Naive thymus-derived CD4-positive, alpha-beta T cell (primary cell): ENCODE measurements at regions of chr2 and their contacts with region 1.

Region 1: DNA sequence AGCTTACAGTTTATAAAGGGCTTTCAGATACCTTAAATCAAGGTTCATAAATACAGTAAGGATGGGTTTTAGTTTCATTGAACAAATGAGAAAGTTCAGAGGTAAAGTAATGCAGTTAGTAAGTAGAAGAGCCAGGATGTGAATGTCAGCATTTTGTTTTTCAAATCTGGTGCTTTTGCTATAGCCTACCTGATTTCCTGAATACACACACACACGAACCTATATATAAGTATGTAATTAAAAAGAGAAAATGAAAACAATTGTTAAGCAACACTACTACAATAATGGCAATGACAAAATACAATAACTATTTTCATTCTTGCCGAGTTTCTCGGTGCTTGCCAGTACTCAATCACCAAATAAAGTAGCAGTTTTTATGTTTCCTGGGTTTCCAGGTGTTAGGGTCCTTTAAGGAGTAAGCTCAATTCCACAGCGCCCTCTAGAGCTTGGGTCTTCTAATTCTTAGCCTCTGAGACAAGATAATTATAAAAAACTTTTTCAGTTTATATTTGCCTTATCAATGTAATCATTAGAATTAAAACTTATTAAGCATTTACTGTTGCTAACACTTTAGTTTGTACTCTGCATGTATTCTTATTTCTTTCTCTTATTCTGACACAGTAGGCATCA is 512.9 kb upstream of the ACVR2A start:
- DNase-seq: peak in 4 of 9 donors; percentile 22 to 29 (median 25)
- ATAC-seq: peak; percentile 52
- H3K4me3 ChIP-seq: no peak overlapping the region
- H3K4me3 Mint-ChIP-seq: peak overlapping the region in 1 of 10 donors; percentile 28
- H3K27ac ChIP-seq: no peak overlapping the region
- H3K27ac Mint-ChIP-seq: no peak overlapping the region
- H3K4me1 ChIP-seq: no peaks in the 10 kb centered on the region
- H3K4me1 Mint-ChIP-seq: peaks cover 2 to 25% (median 10%) of the 10 kb centered on the region in 7 donors
- H3K27me3 ChIP-seq: no peaks in the 10 kb centered on the region
- H3K27me3 Mint-ChIP-seq: peaks cover 0 to 2% (median 0%) of the 10 kb centered on the region in 5 donors

Region 2: GRCh38 chr2:147045113-147045512 is 286.8 kb before region 1 on chr2:
- CTCF ChIA-PET with region 1: no interaction called
- POLR2A ChIA-PET with region 1: no interaction called
- intact Hi-C with region 1: loop called (anchors 1 to 10 kb)
- DNase-seq: peak in 7 of 9 donors; percentile 5 to 26 (median 12)
- ATAC-seq: peak; percentile 38
- H3K4me3 ChIP-seq: no peak overlapping the region
- H3K4me3 Mint-ChIP-seq: no peak overlapping the region
- H3K27ac ChIP-seq: no peak overlapping the region
- H3K27ac Mint-ChIP-seq: peak overlapping the region in 1 of 9 donors; percentile 56
- H3K4me1 ChIP-seq: no peaks in the 10 kb centered on the region
- H3K4me1 Mint-ChIP-seq: peaks cover 0 to 6% (median 0%) of the 10 kb centered on the region in 7 donors
- H3K27me3 ChIP-seq: no peaks in the 10 kb centered on the region
- H3K27me3 Mint-ChIP-seq: peaks cover 0 to 17% (median 4%) of the 10 kb centered on the region in 5 donors

Region 3: DNA sequence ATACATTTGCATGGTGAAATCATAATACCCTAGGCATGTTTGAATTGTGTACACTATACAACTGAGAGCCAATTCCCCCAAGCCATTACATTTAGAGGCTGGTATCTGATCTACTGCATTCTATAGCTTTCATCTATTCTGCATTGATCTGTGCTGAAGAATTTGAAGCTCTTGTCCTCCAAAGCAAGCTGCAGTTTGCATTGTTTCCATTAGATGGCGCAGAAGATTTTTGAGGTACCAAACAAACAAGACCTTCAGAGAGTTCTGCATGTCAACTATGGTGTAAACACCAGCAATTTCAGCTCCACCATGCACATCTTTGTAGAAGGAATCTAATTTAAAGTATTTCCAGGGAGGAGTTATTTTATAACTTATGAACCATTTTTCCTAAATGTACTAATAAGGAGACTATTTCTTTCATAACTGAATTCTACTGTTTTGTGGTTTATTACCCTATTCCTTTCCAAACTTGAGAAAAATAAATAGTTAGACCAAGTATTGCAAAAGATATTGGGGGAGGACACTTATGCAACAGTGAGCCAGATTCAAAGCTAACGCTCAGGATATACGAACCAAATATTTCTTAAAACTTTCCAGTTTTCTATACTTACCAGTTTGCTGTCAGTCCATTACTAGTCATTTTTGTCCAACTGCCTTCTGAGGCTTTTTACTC is 248.9 kb before region 1 on chr2:
- CTCF ChIA-PET with region 1: no interaction called
- POLR2A ChIA-PET with region 1: no interaction called
- intact Hi-C with region 1: loop called (anchors 1 kb)
- DNase-seq: peak in 8 of 9 donors; percentile 11 to 57 (median 44)
- ATAC-seq: peak; percentile 68
- H3K4me3 ChIP-seq: no peak overlapping the region
- H3K4me3 Mint-ChIP-seq: no peak overlapping the region
- H3K27ac ChIP-seq: no peak overlapping the region
- H3K27ac Mint-ChIP-seq: no peak overlapping the region
- H3K4me1 ChIP-seq: no peaks in the 10 kb centered on the region
- H3K4me1 Mint-ChIP-seq: peaks cover 0 to 12% (median 0%) of the 10 kb centered on the region in 7 donors
- H3K27me3 ChIP-seq: no peaks in the 10 kb centered on the region
- H3K27me3 Mint-ChIP-seq: peaks cover 7 to 15% (median 9%) of the 10 kb centered on the region in 5 donors

Region 4: GRCh38 chr2:147182260-147182659 is 149.6 kb before region 1 on chr2:
- CTCF ChIA-PET with region 1: no interaction called
- POLR2A ChIA-PET with region 1: no interaction called
- intact Hi-C with region 1: loop called in 1 of 2 experiments (anchors 2 kb)
- DNase-seq: peak in 3 of 9 donors; percentile 1 to 56 (median 12)
- ATAC-seq: peak; percentile 79
- H3K4me3 ChIP-seq: no peak overlapping the region
- H3K4me3 Mint-ChIP-seq: peak overlapping the region in 1 of 10 donors; percentile 48
- H3K27ac ChIP-seq: no peak overlapping the region
- H3K27ac Mint-ChIP-seq: peak overlapping the region in 1 of 9 donors; percentile 82
- H3K4me1 ChIP-seq: no peaks in the 10 kb centered on the region
- H3K4me1 Mint-ChIP-seq: peaks cover 0 to 32% (median 10%) of the 10 kb centered on the region in 7 donors
- H3K27me3 ChIP-seq: no peaks in the 10 kb centered on the region
- H3K27me3 Mint-ChIP-seq: peaks cover 0 to 37% (median 11%) of the 10 kb centered on the region in 5 donors

Region 5: DNA sequence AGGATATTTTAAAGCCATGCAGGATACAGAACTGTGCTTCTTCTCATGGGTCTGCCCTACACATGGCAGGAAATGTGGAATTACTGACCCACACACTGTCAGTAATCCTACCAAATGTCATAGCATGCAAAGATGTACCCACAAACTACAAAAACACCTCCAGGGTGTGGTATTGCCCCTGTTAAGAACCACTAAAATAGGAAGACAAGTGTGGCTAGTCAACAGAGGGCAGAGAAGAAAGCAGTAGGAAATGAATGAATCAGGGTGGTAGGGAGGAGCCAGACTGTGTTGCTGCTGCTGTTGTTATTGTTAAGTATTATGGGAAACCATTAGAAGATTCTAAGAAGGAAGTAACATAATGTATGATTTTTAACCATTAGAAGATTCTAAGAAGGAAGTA is 43.8 kb before region 1 on chr2:
- CTCF ChIA-PET with region 1: interaction called, 4 read pairs
- POLR2A ChIA-PET with region 1: no interaction called
- intact Hi-C with region 1: loop called (anchors 1 kb)
- DNase-seq: peak in 5 of 9 donors; percentile 2 to 48 (median 19)
- ATAC-seq: peak; percentile 87
- H3K4me3 ChIP-seq: no peak overlapping the region
- H3K4me3 Mint-ChIP-seq: peak overlapping the region in 1 of 10 donors; percentile 45
- H3K27ac ChIP-seq: no peak overlapping the region
- H3K27ac Mint-ChIP-seq: peak overlapping the region in 4 of 9 donors; percentile 25 to 84 (median 63)
- H3K4me1 ChIP-seq: peaks cover 0 to 10% of the 10 kb centered on the region in 2 donors
- H3K4me1 Mint-ChIP-seq: peaks cover 8 to 43% (median 9%) of the 10 kb centered on the region in 7 donors
- H3K27me3 ChIP-seq: no peaks in the 10 kb centered on the region
- H3K27me3 Mint-ChIP-seq: peaks cover 0 to 5% (median 0%) of the 10 kb centered on the region in 5 donors

Region 6: GRCh38 chr2:147297820-147298219 is 34.1 kb before region 1 on chr2:
- CTCF ChIA-PET with region 1: no interaction called
- POLR2A ChIA-PET with region 1: no interaction called
- intact Hi-C with region 1: loop called (anchors 1 to 2 kb)
- DNase-seq: peak in 7 of 9 donors; percentile 13 to 63 (median 32)
- ATAC-seq: peak; percentile 76
- H3K4me3 ChIP-seq: no peak overlapping the region
- H3K4me3 Mint-ChIP-seq: peak overlapping the region in 8 of 10 donors; percentile 9 to 53 (median 38)
- H3K27ac ChIP-seq: no peak overlapping the region
- H3K27ac Mint-ChIP-seq: peak overlapping the region; percentile 53 to 94 (median 85)
- H3K4me1 ChIP-seq: peaks cover 18 to 26% of the 10 kb centered on the region in 2 donors
- H3K4me1 Mint-ChIP-seq: peaks cover 10 to 60% (median 29%) of the 10 kb centered on the region in 7 donors
- H3K27me3 ChIP-seq: no peaks in the 10 kb centered on the region
- H3K27me3 Mint-ChIP-seq: peaks cover 0 to 17% (median 0%) of the 10 kb centered on the region in 5 donors

Region 7: GRCh38 chr2:147998203-147998602 is 666.3 kb after region 1 on chr2:
- CTCF ChIA-PET with region 1: no interaction called
- POLR2A ChIA-PET with region 1: no interaction called
- intact Hi-C with region 1: no loop called
- DNase-seq: no peak
- ATAC-seq: no peak
- H3K4me3 ChIP-seq: no peak overlapping the region
- H3K4me3 Mint-ChIP-seq: no peak overlapping the region
- H3K27ac ChIP-seq: no peak overlapping the region
- H3K27ac Mint-ChIP-seq: peak overlapping the region in 2 of 9 donors; percentile 11 to 35
- H3K4me1 ChIP-seq: no peaks in the 10 kb centered on the region
- H3K4me1 Mint-ChIP-seq: peaks cover 7 to 68% (median 57%) of the 10 kb centered on the region in 7 donors
- H3K27me3 ChIP-seq: no peaks in the 10 kb centered on the region
- H3K27me3 Mint-ChIP-seq: no peaks in the 10 kb centered on the region